ENCODE measurements at regions of chr20 and their contacts with region 1.

Region 1: DNA sequence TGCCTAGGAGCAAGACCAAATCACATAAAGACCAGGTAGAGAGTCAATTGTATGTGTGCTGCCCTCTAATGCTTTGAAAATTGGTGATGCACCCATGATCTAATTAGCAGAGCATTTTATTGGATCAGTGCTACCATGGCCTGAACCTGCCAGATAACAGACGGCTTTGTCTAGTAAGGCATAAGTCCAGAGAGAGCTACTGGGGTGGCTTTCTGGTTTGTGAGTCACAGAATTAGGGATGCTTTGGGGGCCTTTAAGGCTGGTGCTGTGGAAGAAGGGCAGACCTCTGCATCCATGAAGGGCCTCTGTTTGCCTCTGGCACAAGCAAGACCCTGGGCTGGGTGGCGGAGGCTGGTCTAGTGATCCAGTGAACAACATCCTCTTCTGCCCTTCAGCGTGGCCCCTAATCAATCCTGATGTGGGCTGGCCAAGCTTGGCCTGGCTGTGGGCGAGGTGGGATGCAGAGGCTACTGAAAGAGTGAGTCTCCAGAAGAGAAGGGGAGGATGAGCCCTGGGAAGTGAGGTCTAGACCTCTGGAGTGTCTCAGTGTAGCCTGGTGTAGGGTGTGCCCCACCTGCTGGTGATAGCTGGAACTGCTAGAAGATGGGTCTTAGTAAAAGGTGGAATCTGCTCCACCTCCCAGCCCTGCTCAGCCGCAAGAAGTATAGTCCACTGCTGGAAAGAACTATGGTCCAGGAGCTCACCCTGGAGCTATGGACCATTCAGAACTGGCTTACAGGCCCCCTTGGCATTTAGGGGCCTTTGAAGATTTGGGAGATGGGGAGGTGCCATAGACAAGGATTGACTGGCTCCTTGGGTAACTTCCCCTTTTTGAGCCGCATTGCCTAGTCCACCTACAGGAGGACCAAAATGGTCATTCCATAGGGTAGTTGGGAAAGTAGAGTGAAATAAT is 36.7 kb upstream of the AAR2 start:
- DNase-seq: peak; percentile 77
- ATAC-seq: peak; percentile 82 to 83
- H3K4me3 ChIP-seq: no peak overlapping the region
- H3K27ac ChIP-seq: no peak overlapping the region
- H3K4me1 ChIP-seq: no peaks in the 10 kb centered on the region
- H3K27me3 ChIP-seq: no peaks in the 10 kb centered on the region
- CTCF ChIP-seq: peak; percentile 85

Region 2: GRCh38 chr20:36439040-36439730 is 239.6 kb after region 1 on chr20:
- intact Hi-C with region 1: loop called (anchors 10 kb)
- DNase-seq: peak; percentile 76
- ATAC-seq: peak; percentile 59 to 66
- H3K4me3 ChIP-seq: no peak overlapping the region
- H3K27ac ChIP-seq: no peak overlapping the region
- H3K4me1 ChIP-seq: peaks cover 8% of the 10 kb centered on the region
- H3K27me3 ChIP-seq: peaks cover 6% of the 10 kb centered on the region
- CTCF ChIP-seq: peak; percentile 83

Measured in lower lobe of right lung (tissue), 2 donors.